ENCODE measurements at regions of chr17 and their contacts with region 1.

Region 1: DNA sequence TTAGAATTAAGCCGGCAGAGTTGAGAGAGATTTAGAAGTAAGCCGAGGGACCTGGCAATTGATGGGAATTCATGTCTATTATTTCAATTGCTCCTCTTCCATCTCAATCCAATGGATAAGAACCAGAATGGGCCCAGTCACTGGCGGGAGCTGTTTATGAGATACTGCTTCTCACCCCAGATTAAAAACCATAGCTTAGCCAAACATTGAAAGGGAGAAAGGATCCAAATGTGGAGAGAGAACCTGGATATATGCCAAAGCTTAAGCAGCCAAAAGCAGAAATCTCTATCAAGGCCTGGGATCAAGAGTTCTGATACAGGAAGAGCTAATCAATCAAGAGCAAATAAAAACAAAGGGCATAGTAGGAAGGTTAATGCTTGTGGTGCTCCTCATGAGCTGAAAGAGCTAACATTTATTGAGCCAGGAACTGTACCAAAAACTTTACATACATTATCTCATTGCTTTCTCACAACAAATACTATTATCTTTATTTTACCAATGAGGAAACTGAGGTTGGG is 2.8 kb downstream of the SLFN12L start:
- DNase-seq: no peak
- H3K4me3 ChIP-seq: no peak overlapping the region
- H3K27ac ChIP-seq: no peak overlapping the region
- H3K4me1 ChIP-seq: peaks cover 9% of the 10 kb centered on the region
- H3K27me3 ChIP-seq: no peaks in the 10 kb centered on the region
- CTCF ChIP-seq: no peak
- POLR2A ChIP-seq: no peak

Region 2: GRCh38 chr17:35361027-35361426 is 173.6 kb before region 1 on chr17:
- CTCF ChIA-PET with region 1: interaction called, 12 read pairs
- POLR2A ChIA-PET with region 1: no interaction called
- dilution Hi-C with region 1: no loop called
- intact Hi-C with region 1: no loop called
- DNase-seq: no peak
- H3K4me3 ChIP-seq: no peak overlapping the region
- H3K27ac ChIP-seq: no peak overlapping the region
- H3K4me1 ChIP-seq: no peaks in the 10 kb centered on the region
- H3K27me3 ChIP-seq: no peaks in the 10 kb centered on the region
- CTCF ChIP-seq: no peak
- POLR2A ChIP-seq: no peak

Region 3: DNA sequence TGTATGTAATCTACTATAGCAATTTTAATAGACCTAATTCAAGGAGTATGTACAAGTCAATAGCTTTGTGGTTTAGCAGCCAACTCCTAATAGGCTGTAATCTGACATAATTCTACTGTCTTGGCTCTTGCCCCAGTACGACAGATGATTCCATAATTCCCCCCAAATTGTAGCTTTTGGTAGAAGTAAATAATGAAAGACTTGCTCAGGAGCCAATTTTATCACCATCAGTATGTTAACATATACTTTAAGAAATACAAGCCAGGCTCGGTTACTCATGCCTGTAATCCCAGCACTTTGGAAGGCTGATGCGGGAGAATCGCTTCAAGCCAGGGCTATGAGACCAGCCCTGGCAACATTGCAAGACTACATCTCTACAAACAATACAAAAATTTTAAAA is 106.4 kb after region 1 on chr17:
- CTCF ChIA-PET with region 1: no interaction called
- POLR2A ChIA-PET with region 1: no interaction called
- dilution Hi-C with region 1: no loop called
- intact Hi-C with region 1: no loop called
- DNase-seq: no peak
- H3K4me3 ChIP-seq: no peak overlapping the region
- H3K27ac ChIP-seq: no peak overlapping the region
- H3K4me1 ChIP-seq: no peaks in the 10 kb centered on the region
- H3K27me3 ChIP-seq: no peaks in the 10 kb centered on the region
- CTCF ChIP-seq: no peak
- POLR2A ChIP-seq: no peak

Region 4: GRCh38 chr17:35684055-35684802 is 149.6 kb after region 1 on chr17:
- CTCF ChIA-PET with region 1: no interaction called
- POLR2A ChIA-PET with region 1: no interaction called
- dilution Hi-C with region 1: no loop called
- intact Hi-C with region 1: no loop called
- DNase-seq: peak; percentile 6
- H3K4me3 ChIP-seq: no peak overlapping the region
- H3K27ac ChIP-seq: no peak overlapping the region
- H3K4me1 ChIP-seq: no peaks in the 10 kb centered on the region
- H3K27me3 ChIP-seq: no peaks in the 10 kb centered on the region
- CTCF ChIP-seq: no peak
- POLR2A ChIP-seq: no peak